Aorta (tissue), 5 donors: ENCODE measurements at regions of chr2 and their contacts with region 1.

Region 1: GRCh38 chr2:151872463-151872862 is 44.2 kb upstream of the ARL5A start:
- DNase-seq: no peak
- ATAC-seq: no peak
- H3K4me3 ChIP-seq: no peak overlapping the region
- H3K27ac ChIP-seq: peak overlapping the region; percentile 21 to 85
- H3K4me1 ChIP-seq: peaks cover 4 to 6% of the 10 kb centered on the region in 2 donors
- H3K27me3 ChIP-seq: no peaks in the 10 kb centered on the region

Region 2: DNA sequence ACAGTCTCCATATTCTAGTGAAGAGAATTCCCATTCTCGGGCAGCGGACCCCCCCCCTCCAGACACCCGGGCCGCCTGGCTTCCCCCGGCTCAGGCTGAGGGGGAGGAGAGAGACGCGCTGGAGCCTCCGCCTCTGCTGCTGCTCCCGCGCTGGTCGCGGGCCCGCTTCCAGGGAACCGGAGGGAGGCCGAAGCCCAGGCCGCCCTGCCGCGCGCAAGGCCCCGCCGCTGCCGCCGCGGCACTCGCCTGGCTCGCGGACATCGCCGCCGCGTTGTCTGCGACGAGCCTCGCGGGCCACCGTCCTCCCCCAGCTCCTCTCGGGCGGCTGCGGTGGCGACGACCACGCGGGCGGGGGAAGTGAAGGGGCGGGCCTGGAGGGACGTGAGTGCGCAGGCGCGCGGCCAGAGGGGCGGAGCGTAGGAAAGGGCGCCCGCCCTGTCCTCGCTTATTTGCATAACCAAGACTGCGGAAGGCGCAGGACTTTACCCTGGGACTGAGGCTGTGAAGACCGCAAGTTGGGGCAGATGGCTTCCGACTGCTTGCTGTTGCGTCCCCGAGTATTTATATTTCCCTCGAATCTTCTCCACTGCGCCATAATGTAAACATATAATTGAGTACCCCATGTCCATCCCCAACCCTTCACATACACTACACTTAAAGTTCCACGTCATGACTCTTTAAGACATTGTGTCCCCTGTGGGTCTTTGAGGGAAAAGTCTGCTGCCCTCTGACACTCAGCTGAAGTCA is 44.1 kb before region 1 on chr2 and contains the start of gene ARL5A:
- intact Hi-C with region 1: loop called (anchors 5 kb)
- DNase-seq: peak; percentile 97 to 99
- ATAC-seq: peak; percentile 98
- H3K4me3 ChIP-seq: peak within 1 kb of the TSS; percentile 85 to 87
- H3K27ac ChIP-seq: peak within 1 kb of the TSS; percentile 72 to 79
- H3K4me1 ChIP-seq: peaks cover 0 to 5% of the 10 kb centered on the region in 2 donors
- H3K27me3 ChIP-seq: no peaks in the 10 kb centered on the region
- total RNA-seq, gene ARL5A: 78.9 to 95.9 TPM

Region 3: GRCh38 chr2:151833984-151834383 is 38.5 kb before region 1 on chr2:
- intact Hi-C with region 1: loop called (anchors 5 kb)
- DNase-seq: no peak
- ATAC-seq: no peak
- H3K4me3 ChIP-seq: no peak overlapping the region
- H3K27ac ChIP-seq: no peak overlapping the region
- H3K4me1 ChIP-seq: no peaks in the 10 kb centered on the region
- H3K27me3 ChIP-seq: no peaks in the 10 kb centered on the region

Region 4: DNA sequence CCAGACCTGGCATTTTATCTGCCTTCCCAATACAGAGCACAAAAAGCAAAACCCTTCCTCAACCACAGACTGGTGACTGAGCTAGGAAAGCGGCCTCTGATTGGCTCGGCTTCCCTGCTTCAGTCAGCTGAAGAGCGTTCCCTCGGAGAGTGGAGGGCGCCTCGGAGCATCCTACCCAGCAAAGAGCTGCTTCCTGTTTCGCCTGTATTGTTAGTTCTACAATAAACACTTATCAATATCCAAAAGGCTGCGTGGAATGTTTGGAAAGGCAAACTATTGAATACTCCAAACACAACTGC is 101.4 kb after region 1 on chr2:
- intact Hi-C with region 1: no loop called
- DNase-seq: peak in 1 of 2 donors; percentile 60
- ATAC-seq: peak; percentile 49
- H3K4me3 ChIP-seq: no peak overlapping the region
- H3K27ac ChIP-seq: no peak overlapping the region
- H3K4me1 ChIP-seq: no peaks in the 10 kb centered on the region
- H3K27me3 ChIP-seq: no peaks in the 10 kb centered on the region